AG04449 (cell line): ENCODE measurements at regions of chr6 and their contacts with region 1.

Region 1: GRCh38 chr6:56851541-56852259 is 103.2 kb upstream of the BEND6 start:
- DNase-seq: no peak
- H3K4me3 ChIP-seq: peak overlapping the region; percentile 74
- CTCF ChIP-seq: peak; percentile 60

Region 2: GRCh38 chr6:56757588-56757984 is 94.1 kb before region 1 on chr6:
- CTCF ChIA-PET with region 1: interaction called, 13 read pairs
- POLR2A ChIA-PET with region 1: no interaction called
- DNase-seq: no peak
- H3K4me3 ChIP-seq: no peak overlapping the region
- CTCF ChIP-seq: peak; percentile 14

Region 3: GRCh38 chr6:56862415-56863175 is 10.9 kb after region 1 on chr6:
- CTCF ChIA-PET with region 1: interaction called, 106 read pairs
- POLR2A ChIA-PET with region 1: interaction called, 3 read pairs
- DNase-seq: no peak
- H3K4me3 ChIP-seq: no peak overlapping the region
- CTCF ChIP-seq: no peak

Region 4: DNA sequence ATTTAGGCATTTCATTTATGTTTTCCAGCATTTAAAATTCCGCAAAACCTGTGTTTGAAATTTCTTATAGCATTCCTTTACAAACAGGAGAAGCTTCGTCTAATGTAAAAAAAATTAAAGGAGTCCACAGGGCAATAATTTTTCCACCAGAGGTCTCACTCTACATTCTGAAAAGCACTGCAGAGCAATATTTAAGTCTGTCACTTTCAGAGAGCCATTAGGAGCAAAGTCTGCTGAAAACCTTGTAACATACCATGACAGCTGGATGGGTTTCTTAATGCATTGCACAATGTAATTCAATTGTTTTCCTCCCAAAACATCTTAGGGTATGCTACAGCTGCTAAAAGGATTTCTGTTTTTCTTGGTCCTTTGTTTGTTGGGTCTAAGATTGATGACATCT is 338.4 kb after region 1 on chr6:
- CTCF ChIA-PET with region 1: no interaction called
- POLR2A ChIA-PET with region 1: no interaction called
- DNase-seq: no peak
- H3K4me3 ChIP-seq: no peak overlapping the region
- CTCF ChIP-seq: no peak